Endothelial cell of umbilical vein (primary cell): ENCODE measurements at regions of chr2 and their contacts with region 1.

Region 1: GRCh38 chr2:166127217-166128155 is at the start of gene SCN1A:
- DNase-seq: peak; percentile 64
- H3K4me3 ChIP-seq: no peak within 1 kb of the TSS
- H3K27ac ChIP-seq: no peak within 1 kb of the TSS
- H3K4me1 ChIP-seq: no peaks in the 10 kb centered on the region
- H3K27me3 ChIP-seq: peaks cover 8 to 17% of the 10 kb centered on the region in 2 experiments
- CTCF ChIP-seq: peak; percentile 41 to 50
- POLR2A ChIP-seq: no peak
- total RNA-seq, gene SCN1A: not detected in 2 replicates

Region 2: DNA sequence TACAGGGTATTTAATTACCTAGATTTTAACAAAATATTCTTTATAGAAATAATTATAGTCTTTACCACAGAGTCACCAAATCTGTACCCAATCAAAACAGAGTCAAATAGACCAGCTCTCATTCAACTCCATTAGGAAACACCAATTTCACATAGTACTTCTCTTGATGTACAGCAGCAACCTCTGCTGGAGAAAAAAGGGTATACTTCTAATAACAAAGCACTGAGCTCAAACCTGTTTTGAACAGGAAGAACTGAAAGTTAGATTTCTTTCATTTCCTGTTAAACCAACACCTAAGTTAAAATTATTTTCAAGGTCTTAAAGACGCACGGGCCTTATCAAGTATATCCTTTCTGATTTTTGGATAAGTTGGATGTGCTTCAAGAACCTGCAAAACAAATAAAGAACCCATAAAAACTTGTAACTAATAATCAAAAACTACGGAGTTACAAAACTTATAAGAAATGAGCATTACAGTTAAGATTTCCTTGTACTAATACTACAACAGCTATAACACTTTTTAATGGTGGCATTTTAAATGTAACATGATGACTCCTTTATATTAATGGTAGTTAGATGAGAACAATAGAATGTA is 252.9 kb before region 1 on chr2:
- CTCF ChIA-PET with region 1: interaction called, 52 read pairs
- POLR2A ChIA-PET with region 1: no interaction called
- dilution Hi-C with region 1: no loop called
- intact Hi-C with region 1: loop called (anchors 10 kb)
- DNase-seq: peak; percentile 65
- H3K4me3 ChIP-seq: no peak overlapping the region
- H3K27ac ChIP-seq: no peak overlapping the region
- H3K4me1 ChIP-seq: peaks cover 7% of the 10 kb centered on the region
- H3K27me3 ChIP-seq: no peaks in the 10 kb centered on the region
- CTCF ChIP-seq: peak; percentile 37 to 38
- POLR2A ChIP-seq: no peak

Region 3: DNA sequence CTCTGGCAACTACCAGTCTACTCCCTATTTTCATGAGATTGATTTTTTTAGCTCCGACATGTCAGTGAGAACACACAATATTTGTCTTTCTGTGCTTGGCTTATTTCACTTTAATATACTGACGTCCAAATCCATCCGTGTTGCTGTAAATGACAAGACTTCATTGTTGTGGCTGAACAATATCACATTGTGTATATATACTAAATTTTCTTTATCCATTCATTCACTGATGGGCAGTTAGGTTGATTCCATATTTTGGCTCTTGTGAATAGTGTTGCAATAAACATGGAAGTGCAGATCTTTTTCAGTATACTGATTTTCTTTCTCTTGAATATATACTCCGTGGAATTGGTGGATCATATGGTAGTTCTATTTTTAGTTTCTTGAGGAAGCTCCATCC is 168.1 kb before region 1 on chr2:
- CTCF ChIA-PET with region 1: interaction called, 193 read pairs
- POLR2A ChIA-PET with region 1: no interaction called
- dilution Hi-C with region 1: no loop called
- intact Hi-C with region 1: loop called (anchors 1 kb)
- DNase-seq: no peak
- H3K4me3 ChIP-seq: no peak overlapping the region
- H3K27ac ChIP-seq: no peak overlapping the region
- H3K4me1 ChIP-seq: peaks cover 4% of the 10 kb centered on the region
- H3K27me3 ChIP-seq: no peaks in the 10 kb centered on the region
- CTCF ChIP-seq: no peak
- POLR2A ChIP-seq: no peak

Region 4: GRCh38 chr2:166000401-166000800 is 127.1 kb before region 1 on chr2:
- CTCF ChIA-PET with region 1: interaction called, 10 read pairs
- POLR2A ChIA-PET with region 1: no interaction called
- dilution Hi-C with region 1: no loop called
- intact Hi-C with region 1: no loop called
- DNase-seq: no peak
- H3K4me3 ChIP-seq: no peak overlapping the region
- H3K27ac ChIP-seq: no peak overlapping the region
- H3K4me1 ChIP-seq: no peaks in the 10 kb centered on the region
- H3K27me3 ChIP-seq: no peaks in the 10 kb centered on the region
- CTCF ChIP-seq: no peak
- POLR2A ChIP-seq: no peak

Region 5: DNA sequence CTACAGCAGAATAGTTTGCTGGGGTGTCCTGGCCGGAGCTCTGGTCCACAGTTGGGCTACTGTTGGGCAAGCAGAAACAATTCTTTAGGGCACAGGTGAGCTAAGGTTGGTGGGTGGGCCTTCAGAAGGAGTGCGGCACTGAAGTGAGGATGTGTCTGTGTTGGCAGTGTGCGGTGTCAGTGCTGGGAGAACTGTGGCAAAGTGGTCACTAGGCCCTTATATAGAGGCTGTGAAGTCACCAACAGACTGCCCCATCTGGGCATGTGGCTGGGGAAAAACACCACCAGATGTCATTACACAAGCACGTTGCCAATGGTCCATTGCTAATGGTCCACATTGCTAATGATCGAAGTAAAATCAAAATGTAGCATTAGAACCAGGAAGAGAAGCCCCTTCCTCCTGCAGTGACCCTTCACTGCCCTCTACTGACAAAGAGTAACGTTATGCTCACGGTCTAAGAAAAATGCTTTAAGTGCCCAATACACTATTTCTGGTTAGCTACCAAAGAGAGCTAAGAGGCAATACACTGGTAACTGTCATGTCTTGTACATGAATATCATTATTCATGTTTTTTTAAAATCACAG is 21.0 kb before region 1 on chr2:
- CTCF ChIA-PET with region 1: interaction called, 25 read pairs
- POLR2A ChIA-PET with region 1: no interaction called
- dilution Hi-C with region 1: no loop called
- intact Hi-C with region 1: loop called (anchors 1 kb)
- DNase-seq: peak; percentile 68
- H3K4me3 ChIP-seq: no peak overlapping the region
- H3K27ac ChIP-seq: no peak overlapping the region
- H3K4me1 ChIP-seq: no peaks in the 10 kb centered on the region
- H3K27me3 ChIP-seq: no peaks in the 10 kb centered on the region
- CTCF ChIP-seq: peak; percentile 47 to 63
- POLR2A ChIP-seq: no peak

Region 6: GRCh38 chr2:166180951-166181812 is 53.7 kb after region 1 on chr2:
- CTCF ChIA-PET with region 1: interaction called, 23 read pairs
- POLR2A ChIA-PET with region 1: no interaction called
- dilution Hi-C with region 1: no loop called
- intact Hi-C with region 1: no loop called
- DNase-seq: peak; percentile 65
- H3K4me3 ChIP-seq: no peak overlapping the region
- H3K27ac ChIP-seq: no peak overlapping the region
- H3K4me1 ChIP-seq: no peaks in the 10 kb centered on the region
- H3K27me3 ChIP-seq: peaks cover 0 to 1% of the 10 kb centered on the region in 2 experiments
- CTCF ChIP-seq: peak; percentile 42 to 57
- POLR2A ChIP-seq: no peak

Region 7: GRCh38 chr2:166234112-166234846 is 106.8 kb after region 1 on chr2:
- CTCF ChIA-PET with region 1: no interaction called
- POLR2A ChIA-PET with region 1: no interaction called
- dilution Hi-C with region 1: no loop called
- intact Hi-C with region 1: no loop called
- DNase-seq: peak; percentile 88
- H3K4me3 ChIP-seq: no peak overlapping the region
- H3K27ac ChIP-seq: peak overlapping the region; percentile 95
- H3K4me1 ChIP-seq: peaks cover 44% of the 10 kb centered on the region
- H3K27me3 ChIP-seq: no peaks in the 10 kb centered on the region
- CTCF ChIP-seq: no peak
- POLR2A ChIP-seq: no peak

Region 8: GRCh38 chr2:166351319-166351718 is 223.8 kb after region 1 on chr2:
- CTCF ChIA-PET with region 1: no interaction called
- POLR2A ChIA-PET with region 1: no interaction called
- dilution Hi-C with region 1: no loop called
- intact Hi-C with region 1: no loop called
- DNase-seq: no peak
- H3K4me3 ChIP-seq: no peak overlapping the region
- H3K27ac ChIP-seq: no peak overlapping the region
- H3K4me1 ChIP-seq: no peaks in the 10 kb centered on the region
- H3K27me3 ChIP-seq: no peaks in the 10 kb centered on the region
- CTCF ChIP-seq: no peak
- POLR2A ChIP-seq: no peak